Mammary epithelial cell (primary cell): ENCODE measurements at regions of chr3 and their contacts with region 1.

Region 1: GRCh38 chr3:17431004-17431403 is 311.4 kb downstream of the TBC1D5 start:
- DNase-seq: peak; percentile 23
- H3K4me3 ChIP-seq: no peak overlapping the region
- H3K27ac ChIP-seq: no peak overlapping the region
- H3K4me1 ChIP-seq: no peaks in the 10 kb centered on the region
- H3K27me3 ChIP-seq: no peaks in the 10 kb centered on the region
- CTCF ChIP-seq: peak; percentile 32 to 53

Region 2: GRCh38 chr3:17398959-17399551 is 31.9 kb before region 1 on chr3:
- CTCF ChIA-PET with region 1: no interaction called
- dilution Hi-C with region 1: no loop called
- in situ Hi-C with region 1: no loop called
- intact Hi-C with region 1: no loop called
- DNase-seq: no peak
- H3K4me3 ChIP-seq: no peak overlapping the region
- H3K27ac ChIP-seq: no peak overlapping the region
- H3K4me1 ChIP-seq: no peaks in the 10 kb centered on the region
- H3K27me3 ChIP-seq: no peaks in the 10 kb centered on the region
- CTCF ChIP-seq: no peak

Region 3: DNA sequence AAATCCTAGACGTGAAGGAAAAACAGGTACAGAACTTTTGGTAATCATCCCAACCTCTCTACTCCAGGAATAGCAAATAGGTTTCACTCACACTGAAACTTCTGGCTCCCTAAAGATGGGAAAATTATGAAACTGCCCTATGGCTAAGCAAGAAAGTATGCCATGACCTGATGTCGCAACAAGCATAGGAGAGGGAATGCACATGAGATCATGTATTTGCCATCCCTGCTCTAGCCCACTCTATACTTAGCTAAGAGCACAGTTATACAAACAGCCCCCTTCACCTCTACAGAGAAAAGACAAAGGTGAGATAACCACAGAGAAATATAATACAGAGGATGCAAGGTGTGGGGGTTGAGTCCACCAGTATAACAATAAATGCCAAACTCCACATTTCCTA is 208.8 kb after region 1 on chr3:
- CTCF ChIA-PET with region 1: no interaction called
- dilution Hi-C with region 1: no loop called
- in situ Hi-C with region 1: no loop called
- intact Hi-C with region 1: loop called (anchors 5 kb)
- DNase-seq: peak; percentile 85
- H3K4me3 ChIP-seq: no peak overlapping the region
- H3K27ac ChIP-seq: peak overlapping the region; percentile 91
- H3K4me1 ChIP-seq: peaks cover 18% of the 10 kb centered on the region
- H3K27me3 ChIP-seq: no peaks in the 10 kb centered on the region
- CTCF ChIP-seq: no peak